PC-9 (cell line): ENCODE measurements at regions of chr4 and their contacts with region 1.

Region 1: GRCh38 chr4:18593445-18594002 is 572.0 kb upstream of the LCORL start:
- DNase-seq: peak in 1 of 2 experiments; percentile 28
- H3K4me3 ChIP-seq: no peak overlapping the region
- H3K27ac ChIP-seq: no peak overlapping the region
- H3K4me1 ChIP-seq: no peaks in the 10 kb centered on the region
- H3K27me3 ChIP-seq: no peaks in the 10 kb centered on the region
- CTCF ChIP-seq: peak; percentile 77

Region 2: DNA sequence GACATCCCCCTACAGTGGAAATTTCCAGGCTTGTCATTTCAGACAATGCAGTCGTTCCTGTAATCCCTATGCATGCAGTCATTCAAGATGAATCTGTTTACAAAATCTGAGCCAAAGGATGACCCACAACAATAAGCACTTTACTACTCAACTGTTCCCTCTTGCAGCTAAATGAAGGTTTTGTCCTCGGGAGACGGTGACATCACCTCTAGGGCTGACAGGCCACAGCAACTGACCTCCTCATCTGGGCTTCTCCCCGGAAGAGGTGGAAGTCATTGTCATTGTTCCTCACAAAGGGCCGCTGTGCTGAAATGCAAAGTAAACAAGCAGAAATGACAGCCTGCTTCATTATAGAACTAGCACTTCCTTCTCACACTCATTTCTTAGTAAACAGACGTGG is 1049.3 kb before region 1 on chr4:
- CTCF ChIA-PET with region 1: interaction called, 3 read pairs
- POLR2A ChIA-PET with region 1: no interaction called
- intact Hi-C with region 1: loop called (anchors 1 kb)
- DNase-seq: peak in 1 of 2 experiments; percentile 46
- H3K4me3 ChIP-seq: no peak overlapping the region
- H3K27ac ChIP-seq: no peak overlapping the region
- H3K4me1 ChIP-seq: 0 out of 2 replicates have a peak, but pooled peaks cover 3% of the 10 kb centered on the region
- H3K27me3 ChIP-seq: no peaks in the 10 kb centered on the region
- CTCF ChIP-seq: no peak

Region 3: GRCh38 chr4:17636696-17637622 is 956.6 kb before region 1 on chr4:
- CTCF ChIA-PET with region 1: no interaction called
- POLR2A ChIA-PET with region 1: no interaction called
- intact Hi-C with region 1: loop called (anchors 10 kb)
- DNase-seq: peak; percentile 39 to 69
- H3K4me3 ChIP-seq: no peak overlapping the region
- H3K27ac ChIP-seq: no peak overlapping the region
- H3K4me1 ChIP-seq: no peaks in the 10 kb centered on the region
- H3K27me3 ChIP-seq: no peaks in the 10 kb centered on the region
- CTCF ChIP-seq: peak; percentile 80

Region 4: DNA sequence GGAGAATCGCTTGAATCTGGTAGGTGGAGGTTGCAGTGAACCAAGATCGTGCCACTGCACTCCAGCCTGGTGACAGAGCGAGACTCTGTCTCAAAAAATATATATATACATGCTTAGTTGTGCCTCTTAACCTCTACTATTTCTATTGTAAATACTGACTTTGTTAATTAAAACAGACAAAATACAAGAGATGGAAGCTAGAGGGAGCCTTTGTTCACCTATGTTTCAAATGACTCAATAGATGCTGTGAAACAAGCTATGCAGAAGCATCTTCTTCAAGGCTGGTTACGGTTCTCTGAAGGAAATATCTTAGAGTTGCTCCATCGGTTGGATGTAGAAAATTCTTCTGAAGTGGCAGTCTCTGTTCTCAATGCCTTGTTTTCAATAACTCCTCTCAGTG is 776.5 kb before region 1 on chr4:
- CTCF ChIA-PET with region 1: no interaction called
- POLR2A ChIA-PET with region 1: no interaction called
- intact Hi-C with region 1: loop called (anchors 2 kb)
- DNase-seq: peak in 1 of 2 experiments; percentile 40
- H3K4me3 ChIP-seq: no peak overlapping the region
- H3K27ac ChIP-seq: no peak overlapping the region
- H3K4me1 ChIP-seq: peaks cover 14% of the 10 kb centered on the region
- H3K27me3 ChIP-seq: no peaks in the 10 kb centered on the region
- CTCF ChIP-seq: peak; percentile 63

Region 5: DNA sequence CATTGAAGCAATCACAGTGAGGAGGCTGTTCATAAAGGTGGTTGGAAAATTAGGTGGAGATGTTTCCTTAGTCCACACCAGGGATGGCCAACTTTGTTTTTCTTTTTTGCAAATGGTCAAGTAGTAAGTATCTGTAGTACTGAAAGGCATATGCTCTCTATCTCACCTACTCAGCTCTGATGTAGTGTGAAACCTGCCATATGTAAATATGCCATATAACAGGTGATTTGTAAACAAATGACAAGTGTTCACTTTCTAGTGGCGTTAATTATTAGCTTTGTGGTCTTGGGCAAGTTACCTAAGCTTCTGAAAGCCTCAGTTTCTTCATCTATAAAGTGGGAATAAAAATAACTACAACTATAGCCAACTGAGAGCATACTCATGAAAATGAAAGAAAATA is 150.6 kb before region 1 on chr4:
- CTCF ChIA-PET with region 1: no interaction called
- POLR2A ChIA-PET with region 1: no interaction called
- intact Hi-C with region 1: no loop called
- DNase-seq: no peak
- H3K4me3 ChIP-seq: no peak overlapping the region
- H3K27ac ChIP-seq: no peak overlapping the region
- H3K4me1 ChIP-seq: no peaks in the 10 kb centered on the region
- H3K27me3 ChIP-seq: no peaks in the 10 kb centered on the region
- CTCF ChIP-seq: no peak

Region 6: DNA sequence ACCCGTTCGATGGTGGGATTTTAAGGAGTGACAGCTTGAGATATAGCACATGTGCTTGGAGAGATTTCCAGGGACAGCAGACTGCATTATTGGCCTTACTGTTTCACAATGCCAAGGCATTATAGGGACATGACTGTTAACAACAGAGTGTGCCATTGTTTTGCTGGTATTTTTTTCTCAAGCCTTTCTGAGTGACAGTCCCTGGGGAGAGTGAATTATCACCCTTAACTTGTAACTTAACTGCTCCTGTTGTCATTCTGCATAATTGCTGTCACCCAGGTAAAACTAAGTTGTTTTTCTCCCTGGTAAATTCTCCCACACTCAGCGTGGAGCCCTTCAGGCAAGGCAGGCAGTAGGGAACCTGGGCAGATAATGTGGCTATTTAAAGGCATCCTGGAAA is 417.2 kb after region 1 on chr4:
- CTCF ChIA-PET with region 1: no interaction called
- POLR2A ChIA-PET with region 1: no interaction called
- intact Hi-C with region 1: no loop called
- DNase-seq: no peak
- H3K4me3 ChIP-seq: no peak overlapping the region
- H3K27ac ChIP-seq: no peak overlapping the region
- H3K4me1 ChIP-seq: no peaks in the 10 kb centered on the region
- H3K27me3 ChIP-seq: no peaks in the 10 kb centered on the region
- CTCF ChIP-seq: no peak